ENCODE measurements at regions of chr6 and their contacts with region 1.

Region 1: GRCh38 chr6:83417880-83418663 is 12.8 kb downstream of the ME1 start:
- DNase-seq: peak; percentile 65 to 80 (median 75)
- H3K4me3 ChIP-seq: no peak overlapping the region
- H3K27ac ChIP-seq: no peak overlapping the region
- H3K4me1 ChIP-seq: peaks cover 0 to 3% (median under 1%) of the 10 kb centered on the region in 4 experiments
- H3K27me3 ChIP-seq: no peaks in the 10 kb centered on the region

Region 2: GRCh38 chr6:83221889-83222479 is 196.1 kb before region 1 on chr6:
- CTCF ChIA-PET with region 1: interaction called, 23 read pairs
- POLR2A ChIA-PET with region 1: no interaction called
- DNase-seq: peak; percentile 42 to 69 (median 62)
- H3K4me3 ChIP-seq: no peak overlapping the region
- H3K27ac ChIP-seq: no peak overlapping the region
- H3K4me1 ChIP-seq: no peaks in the 10 kb centered on the region
- H3K27me3 ChIP-seq: peaks cover 0 to 2% (median 0%) of the 10 kb centered on the region in 5 experiments

Region 3: GRCh38 chr6:83436674-83437073 is 18.6 kb after region 1 on chr6:
- CTCF ChIA-PET with region 1: interaction called, 12 read pairs
- POLR2A ChIA-PET with region 1: no interaction called
- DNase-seq: no peak
- H3K4me3 ChIP-seq: no peak overlapping the region
- H3K27ac ChIP-seq: no peak overlapping the region
- H3K4me1 ChIP-seq: peaks cover 0 to 37% (median 12%) of the 10 kb centered on the region in 4 experiments
- H3K27me3 ChIP-seq: peaks cover 0 to 20% (median 13%) of the 10 kb centered on the region in 5 experiments